ENCODE measurements at regions of chr13 and their contacts with region 1.

Region 1: DNA sequence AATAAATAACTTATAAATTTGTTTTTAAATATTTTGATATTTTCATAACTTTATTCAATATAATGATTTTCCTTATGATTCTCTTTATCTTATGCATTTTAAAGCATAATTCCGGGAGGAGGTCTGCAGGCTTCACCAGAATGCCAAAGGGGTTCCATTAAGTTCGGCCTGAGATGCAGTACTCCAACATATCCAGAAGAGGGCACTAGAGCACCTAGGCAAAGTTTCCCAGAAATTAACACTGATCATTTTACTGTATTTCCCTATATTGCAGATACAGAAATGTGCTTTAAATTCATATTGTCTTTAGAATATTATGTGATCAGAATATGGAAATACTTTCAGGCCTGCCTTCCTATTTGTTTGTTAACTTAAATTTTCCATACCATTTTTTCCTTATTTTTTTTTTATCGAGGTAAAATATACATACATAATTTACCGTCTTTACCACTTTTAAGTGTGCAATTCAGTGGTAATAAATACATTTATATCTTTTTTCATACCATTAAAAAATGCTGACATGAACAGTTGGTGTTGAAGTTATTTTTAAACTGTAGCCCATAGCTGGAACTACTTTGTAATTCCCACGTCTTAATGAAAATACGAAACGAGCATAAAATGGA is 58.9 kb upstream of the TM9SF2 start:
- DNase-seq: peak; percentile 45
- ATAC-seq: peak; percentile 91
- H3K4me3 ChIP-seq: no peak overlapping the region
- H3K27ac ChIP-seq: no peak overlapping the region
- H3K4me1 ChIP-seq: no peaks in the 10 kb centered on the region
- H3K27me3 ChIP-seq: peaks cover 26% of the 10 kb centered on the region
- CTCF ChIP-seq: peak; percentile 94
- POLR2A ChIP-seq: no peak
- RAD21 ChIP-seq: peak; percentile 89

Region 2: GRCh38 chr13:99505814-99506269 is 63.5 kb after region 1 on chr13:
- CTCF ChIA-PET with region 1: interaction called, 3 read pairs
- POLR2A ChIA-PET with region 1: no interaction called
- dilution Hi-C with region 1: no loop called
- in situ Hi-C with region 1: no loop called
- intact Hi-C with region 1: loop called (anchors 1 kb)
- DNase-seq: peak; percentile 63
- ATAC-seq: no peak
- H3K4me3 ChIP-seq: no peak overlapping the region
- H3K27ac ChIP-seq: no peak overlapping the region
- H3K4me1 ChIP-seq: peaks cover 2% of the 10 kb centered on the region
- H3K27me3 ChIP-seq: no peaks in the 10 kb centered on the region
- CTCF ChIP-seq: peak; percentile 46
- POLR2A ChIP-seq: no peak
- RAD21 ChIP-seq: 0 out of 2 replicates have a peak, but pooled peaks have one; percentile 11

Region 3: DNA sequence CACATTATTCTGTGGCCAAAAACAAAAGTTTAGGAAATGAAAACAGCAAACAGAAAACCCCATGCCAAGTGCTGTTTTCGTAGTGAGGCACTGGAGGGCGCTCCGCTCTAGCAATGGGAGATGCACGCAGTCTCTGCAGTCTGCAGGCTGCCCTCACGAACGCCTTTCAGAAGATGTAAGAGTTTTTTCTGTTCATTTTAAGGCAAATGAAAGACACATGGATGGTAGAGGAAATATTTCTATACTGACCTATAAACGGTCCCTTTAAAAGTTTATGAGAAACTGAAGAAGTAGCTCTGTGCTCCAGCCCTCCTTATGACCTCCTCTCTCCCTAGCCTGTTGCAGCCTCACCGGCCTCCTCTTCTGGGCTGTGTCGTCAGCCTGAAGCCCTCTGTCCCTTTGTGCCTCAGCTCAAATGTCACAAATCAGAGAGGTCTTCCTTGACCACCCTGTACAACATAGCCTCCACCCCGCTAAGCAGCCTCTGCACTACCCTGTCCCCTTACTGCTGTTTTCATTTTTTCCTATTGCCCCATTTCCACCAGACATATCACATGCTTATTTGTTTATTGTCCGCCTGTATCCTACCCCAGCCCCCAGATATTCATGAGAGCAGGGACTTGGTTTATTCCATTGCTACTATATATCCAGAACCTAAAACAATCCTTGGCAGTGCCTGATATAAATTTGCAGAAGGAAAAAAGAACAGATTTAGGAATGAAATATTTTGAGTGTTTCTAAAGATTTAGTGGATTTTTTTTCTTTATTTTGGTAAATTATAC is 175.3 kb after region 1 on chr13:
- CTCF ChIA-PET with region 1: no interaction called
- POLR2A ChIA-PET with region 1: no interaction called
- dilution Hi-C with region 1: no loop called
- in situ Hi-C with region 1: no loop called
- intact Hi-C with region 1: loop called (anchors 5 kb)
- DNase-seq: peak; percentile 38
- ATAC-seq: peak; percentile 92
- H3K4me3 ChIP-seq: no peak overlapping the region
- H3K27ac ChIP-seq: no peak overlapping the region
- H3K4me1 ChIP-seq: no peaks in the 10 kb centered on the region
- H3K27me3 ChIP-seq: peaks cover 24% of the 10 kb centered on the region
- CTCF ChIP-seq: peak; percentile 62
- POLR2A ChIP-seq: no peak
- RAD21 ChIP-seq: peak; percentile 68

Region 4: GRCh38 chr13:99805361-99805760 is 363.0 kb after region 1 on chr13:
- CTCF ChIA-PET with region 1: no interaction called
- POLR2A ChIA-PET with region 1: no interaction called
- dilution Hi-C with region 1: no loop called
- in situ Hi-C with region 1: no loop called
- intact Hi-C with region 1: loop called (anchors 10 kb)
- DNase-seq: no peak
- ATAC-seq: no peak
- H3K4me3 ChIP-seq: no peak overlapping the region
- H3K27ac ChIP-seq: no peak overlapping the region
- H3K4me1 ChIP-seq: no peaks in the 10 kb centered on the region
- H3K27me3 ChIP-seq: no peaks in the 10 kb centered on the region; the same call in 1 of the 2 replicates
- CTCF ChIP-seq: no peak
- POLR2A ChIP-seq: no peak
- RAD21 ChIP-seq: no peak

Region 5: DNA sequence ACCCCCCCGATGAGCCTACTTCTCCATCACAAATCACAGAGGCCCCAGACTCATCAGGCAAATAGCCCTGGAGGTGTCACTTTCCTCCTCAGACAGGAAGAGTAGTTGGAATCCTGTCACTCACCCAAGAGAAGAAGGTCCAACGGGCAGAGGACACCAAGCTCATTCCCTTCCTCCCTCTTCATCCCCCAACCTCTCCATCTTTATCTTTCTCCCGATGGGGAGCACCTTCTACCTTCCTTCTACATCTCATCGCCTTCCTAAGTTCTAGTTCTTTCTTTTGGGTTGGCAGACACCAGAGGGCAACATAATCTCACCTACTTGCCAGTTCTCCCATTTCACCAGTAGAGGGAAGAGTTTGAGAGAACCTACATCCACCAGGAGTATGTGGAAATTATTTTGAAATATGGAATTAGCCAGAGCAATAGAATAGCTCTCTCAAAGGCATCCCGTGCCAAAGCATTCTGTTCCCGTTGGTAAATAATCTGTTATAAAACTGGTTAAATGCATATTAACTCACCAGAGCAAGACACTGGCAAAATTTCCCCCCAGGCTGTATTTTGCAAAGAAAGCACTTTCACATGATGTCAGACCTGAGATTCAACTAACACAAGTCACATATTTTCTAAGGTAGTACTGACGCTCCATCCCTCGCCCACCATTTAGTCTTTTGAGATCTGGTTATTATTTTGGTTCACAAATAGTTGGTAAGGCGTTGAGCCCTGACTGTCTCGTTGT is 474.2 kb after region 1 on chr13:
- CTCF ChIA-PET with region 1: no interaction called
- POLR2A ChIA-PET with region 1: no interaction called
- dilution Hi-C with region 1: no loop called
- in situ Hi-C with region 1: no loop called
- intact Hi-C with region 1: loop called (anchors 1 kb)
- DNase-seq: peak; percentile 71
- ATAC-seq: peak; percentile 89
- H3K4me3 ChIP-seq: no peak overlapping the region
- H3K27ac ChIP-seq: no peak overlapping the region
- H3K4me1 ChIP-seq: no peaks in the 10 kb centered on the region
- H3K27me3 ChIP-seq: peaks cover 24% of the 10 kb centered on the region
- CTCF ChIP-seq: peak; percentile 100
- POLR2A ChIP-seq: no peak
- RAD21 ChIP-seq: peak; percentile 79

Measured in IMR-90 (cell line).